ENCODE measurements at regions of chr4 and their contacts with region 1.

Region 1: DNA sequence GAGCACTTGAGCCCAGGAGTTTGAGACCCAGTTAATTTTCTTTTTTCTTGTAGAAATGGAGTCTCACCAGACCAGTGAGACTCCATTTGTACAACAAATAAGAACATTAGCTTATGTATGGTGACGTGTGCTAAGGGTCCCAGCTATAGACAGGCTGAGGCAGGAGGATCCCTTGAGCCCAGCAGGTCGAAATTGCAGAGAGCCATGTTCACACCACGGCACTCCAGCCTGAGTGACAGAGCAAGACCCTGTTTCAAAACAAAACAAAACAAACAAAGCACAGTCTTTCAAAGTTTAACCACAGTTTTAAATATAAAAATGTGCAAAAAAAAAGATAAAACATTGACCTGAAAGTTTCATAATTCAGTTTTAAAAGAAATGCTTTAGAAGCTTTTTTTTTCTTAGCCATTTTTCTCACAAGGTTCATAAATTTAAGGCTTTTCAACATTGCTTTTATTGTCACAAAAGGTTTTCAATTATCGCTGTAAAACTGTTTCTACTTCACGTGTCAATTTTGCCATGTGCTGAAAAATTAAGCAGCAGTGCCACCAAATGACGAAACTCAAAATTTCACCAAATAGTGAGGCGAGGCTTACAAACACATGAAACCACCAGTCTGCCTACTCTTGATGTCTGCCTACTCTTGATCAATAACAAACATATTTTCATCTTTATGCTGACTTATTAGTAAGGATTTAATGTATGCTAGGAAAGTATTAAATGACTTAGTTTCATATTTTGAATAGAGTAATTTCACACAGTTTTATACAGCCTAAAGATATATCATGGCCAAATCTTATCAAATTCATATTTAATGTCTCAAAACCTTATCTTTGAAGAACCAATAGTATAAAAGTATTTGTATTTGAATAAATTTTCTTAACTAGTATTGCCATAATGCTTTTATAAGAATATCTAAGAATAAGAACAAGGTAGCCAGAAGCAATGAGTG is 126.3 kb downstream of the NEK1 start:
- DNase-seq: peak; percentile 71

Region 2: GRCh38 chr4:169010125-169011023 is 475.7 kb before region 1 on chr4 and contains the start of gene CBR4:
- in situ Hi-C with region 1: loop called (anchors 25 kb)
- DNase-seq: peak; percentile 100

Measured in KBM-7 (cell line).